Spleen (tissue), 13 donors: ENCODE measurements at regions of chr12 and their contacts with region 1.

Region 1: GRCh38 chr12:95922231-95922630 is 20.2 kb downstream of the CCDC38 start:
- DNase-seq: no peak
- H3K4me3 ChIP-seq: no peak overlapping the region
- H3K27ac ChIP-seq: no peak overlapping the region
- H3K4me1 ChIP-seq: peaks cover 0 to 8% (median 4%) of the 10 kb centered on the region in 6 donors
- H3K27me3 ChIP-seq: no peaks in the 10 kb centered on the region
- CTCF ChIP-seq: no peak
- POLR2A ChIP-seq: no peak

Region 2: GRCh38 chr12:95998611-95999286 is 76.5 kb after region 1 on chr12:
- intact Hi-C with region 1: loop called (anchors 5 kb)
- DNase-seq: no peak
- H3K4me3 ChIP-seq: no peak overlapping the region
- H3K27ac ChIP-seq: peak overlapping the region in 3 of 8 donors; percentile 84 to 91 (median 84)
- H3K4me1 ChIP-seq: peaks cover 0 to 24% (median 6%) of the 10 kb centered on the region in 6 donors
- H3K27me3 ChIP-seq: no peaks in the 10 kb centered on the region
- CTCF ChIP-seq: peak; percentile 69 to 90 (median 81)
- POLR2A ChIP-seq: no peak